ENCODE measurements at regions of chr3 and their contacts with region 1.

Region 1: GRCh38 chr3:129095285-129095684 is 26.3 kb downstream of the RAB43 start:
- DNase-seq: no peak
- ATAC-seq: no peak
- H3K4me3 ChIP-seq: no peak overlapping the region
- H3K27ac ChIP-seq: no peak overlapping the region
- H3K4me1 ChIP-seq: no peaks in the 10 kb centered on the region
- H3K27me3 ChIP-seq: no peaks in the 10 kb centered on the region
- CTCF ChIP-seq: no peak

Region 2: DNA sequence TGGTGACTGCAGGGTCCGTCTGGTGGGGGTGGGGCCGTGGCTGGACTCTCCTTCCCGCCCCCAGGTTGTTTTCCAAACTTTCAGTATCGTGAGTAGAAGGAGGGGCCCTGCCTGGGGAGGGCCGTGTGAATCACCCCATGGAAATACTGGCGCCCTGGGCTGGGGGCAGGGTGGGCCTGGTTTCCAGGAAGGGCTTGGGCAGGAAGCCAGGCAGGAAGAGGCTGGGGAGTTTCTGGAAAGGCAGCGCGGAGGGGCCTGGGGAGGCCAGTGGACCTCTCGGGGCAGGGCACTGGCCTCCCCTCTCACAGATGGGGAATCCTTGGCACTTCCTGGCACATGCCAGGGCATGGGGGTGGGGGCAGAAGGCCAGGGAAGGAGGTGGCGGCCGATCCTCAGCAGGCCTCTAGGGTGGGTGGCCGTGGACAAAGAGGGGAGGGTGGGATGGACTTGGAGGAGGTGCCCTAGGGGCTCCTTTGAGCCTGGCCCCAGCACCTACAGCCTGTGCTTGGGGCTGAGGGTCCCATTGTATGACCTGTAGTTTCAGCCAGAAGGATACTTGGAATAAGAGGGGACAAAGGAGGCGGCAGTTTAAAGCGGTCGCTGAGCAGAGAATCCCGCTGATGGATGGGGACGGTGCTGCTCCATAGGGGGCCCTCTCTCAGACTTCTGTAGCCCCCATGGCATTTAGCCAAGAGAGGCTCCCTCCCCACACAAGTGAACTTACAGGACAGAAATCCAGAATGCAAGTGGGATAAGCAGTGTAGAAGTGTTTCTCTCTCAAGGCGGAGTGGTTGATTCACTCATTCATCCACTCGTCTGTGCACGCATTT is 545.8 kb before region 1 on chr3:
- intact Hi-C with region 1: no loop called
- DNase-seq: peak in 3 of 6 donors; percentile 19 to 52 (median 22)
- ATAC-seq: peak in 3 of 4 donors; percentile 30 to 80 (median 78)
- H3K4me3 ChIP-seq: no peak overlapping the region
- H3K27ac ChIP-seq: peak overlapping the region in 2 of 4 donors; percentile 4 to 27
- H3K4me1 ChIP-seq: no peaks in the 10 kb centered on the region
- H3K27me3 ChIP-seq: no peaks in the 10 kb centered on the region
- CTCF ChIP-seq: no peak

Region 3: GRCh38 chr3:128969993-128970739 is 125.1 kb before region 1 on chr3:
- intact Hi-C with region 1: loop called in 1 of 3 experiments (anchors 10 kb)
- DNase-seq: peak in 3 of 6 donors; percentile 37 to 70 (median 41)
- ATAC-seq: peak; percentile 63 to 90 (median 84)
- H3K4me3 ChIP-seq: no peak overlapping the region
- H3K27ac ChIP-seq: no peak overlapping the region
- H3K4me1 ChIP-seq: peaks cover 0 to 3% (median 0%) of the 10 kb centered on the region in 3 donors
- H3K27me3 ChIP-seq: no peaks in the 10 kb centered on the region
- CTCF ChIP-seq: peak; percentile 67 to 84 (median 78)

Region 4: DNA sequence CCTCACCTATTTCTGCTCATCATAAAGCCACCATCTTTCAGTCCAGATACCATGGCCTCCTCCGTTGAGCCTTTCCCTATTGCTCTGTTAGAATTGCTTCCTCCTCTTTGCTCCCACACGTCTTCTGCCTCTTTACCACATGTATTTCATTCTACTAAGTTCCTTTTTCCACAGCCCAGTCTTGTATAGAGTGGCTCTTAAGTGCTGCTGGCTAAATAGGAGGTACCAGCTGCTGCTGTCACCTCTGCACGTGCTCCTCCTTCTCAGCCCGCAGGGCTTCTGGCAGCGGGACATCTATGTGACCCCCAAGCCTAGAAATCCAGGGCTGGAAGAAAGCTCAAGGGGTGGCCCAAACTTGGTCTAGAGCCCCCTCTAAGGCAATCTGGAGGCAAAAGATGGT is 550.0 kb after region 1 on chr3:
- intact Hi-C with region 1: no loop called
- DNase-seq: no peak
- ATAC-seq: peak in 1 of 4 donors; percentile 33
- H3K4me3 ChIP-seq: no peak overlapping the region
- H3K27ac ChIP-seq: no peak overlapping the region
- H3K4me1 ChIP-seq: no peaks in the 10 kb centered on the region
- H3K27me3 ChIP-seq: no peaks in the 10 kb centered on the region
- CTCF ChIP-seq: no peak

Measured in pancreas (tissue), 10 donors.